Aorta (tissue), 5 donors: ENCODE measurements at regions of chr13 and their contacts with region 1.

Region 1: GRCh38 chr13:33194820-33195692 is 90.5 kb downstream of the STARD13 start:
- DNase-seq: no peak
- ATAC-seq: no peak
- H3K4me3 ChIP-seq: no peak overlapping the region
- H3K27ac ChIP-seq: no peak overlapping the region
- H3K4me1 ChIP-seq: peaks cover 11 to 24% of the 10 kb centered on the region in 2 donors
- H3K27me3 ChIP-seq: no peaks in the 10 kb centered on the region

Region 2: DNA sequence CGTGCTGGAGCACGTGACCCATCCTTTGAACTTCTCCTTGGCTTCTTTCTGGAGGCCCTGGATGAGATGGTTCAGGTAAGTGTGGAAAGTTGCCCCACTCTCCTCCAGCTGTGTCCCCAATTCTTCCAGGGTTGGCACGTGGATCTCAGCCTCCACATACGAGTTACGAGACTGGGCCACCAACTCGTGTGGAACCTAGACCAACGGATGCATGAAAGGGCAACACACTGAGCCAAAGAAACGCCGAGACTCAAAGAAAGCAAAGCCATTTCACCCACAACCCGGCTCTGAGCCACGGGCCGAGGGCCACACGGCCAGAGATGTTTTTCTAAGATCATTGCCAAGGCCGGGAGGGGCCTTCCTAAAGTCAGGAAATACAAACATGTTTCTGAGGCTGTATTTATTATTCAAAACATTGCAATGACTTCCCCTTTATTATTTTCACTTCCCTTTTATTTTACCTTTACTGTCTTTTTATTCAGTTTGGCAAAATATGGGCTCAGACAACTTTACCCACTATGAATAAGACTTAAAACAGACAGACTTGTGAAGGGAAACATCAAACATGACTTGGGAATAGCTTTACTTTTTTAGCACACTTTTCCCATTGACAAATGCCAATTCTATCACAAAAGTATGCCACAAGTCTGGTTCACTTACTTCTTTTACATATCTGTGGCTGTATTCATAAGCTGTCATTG is 84.2 kb before region 1 on chr13:
- intact Hi-C with region 1: loop called (anchors 5 to 10 kb)
- DNase-seq: peak in 1 of 2 donors; percentile 84
- ATAC-seq: peak; percentile 73
- H3K4me3 ChIP-seq: no peak overlapping the region
- H3K27ac ChIP-seq: peak overlapping the region; percentile 59 to 72
- H3K4me1 ChIP-seq: peaks cover 6 to 11% of the 10 kb centered on the region in 2 donors
- H3K27me3 ChIP-seq: no peaks in the 10 kb centered on the region

Region 3: DNA sequence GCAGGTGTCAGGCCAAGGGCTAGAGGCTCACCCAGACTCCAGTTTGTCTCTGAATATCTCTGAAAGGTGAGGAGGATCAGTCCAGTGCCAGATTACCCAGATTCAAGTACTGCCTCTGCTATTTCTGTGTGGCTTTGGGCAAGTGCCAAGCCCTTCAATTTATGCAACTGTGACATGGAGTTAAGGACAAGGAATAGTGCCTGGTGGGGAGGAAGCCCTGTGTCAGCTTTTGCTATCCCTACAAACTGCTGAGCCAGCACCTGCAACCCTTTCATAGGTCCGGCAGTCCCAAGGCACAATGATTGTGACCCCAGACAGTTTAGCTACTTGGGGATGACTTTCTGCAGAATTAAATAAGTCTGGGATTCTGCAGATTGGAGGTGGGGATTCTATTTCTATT is 55.9 kb before region 1 on chr13:
- intact Hi-C with region 1: no loop called
- DNase-seq: peak in 1 of 2 donors; percentile 81
- ATAC-seq: peak; percentile 69
- H3K4me3 ChIP-seq: no peak overlapping the region
- H3K27ac ChIP-seq: no peak overlapping the region
- H3K4me1 ChIP-seq: peaks cover 0 to 4% of the 10 kb centered on the region in 2 donors
- H3K27me3 ChIP-seq: no peaks in the 10 kb centered on the region